HCT116 (cell line): ENCODE measurements at regions of chr17 and their contacts with region 1.

Region 1: DNA sequence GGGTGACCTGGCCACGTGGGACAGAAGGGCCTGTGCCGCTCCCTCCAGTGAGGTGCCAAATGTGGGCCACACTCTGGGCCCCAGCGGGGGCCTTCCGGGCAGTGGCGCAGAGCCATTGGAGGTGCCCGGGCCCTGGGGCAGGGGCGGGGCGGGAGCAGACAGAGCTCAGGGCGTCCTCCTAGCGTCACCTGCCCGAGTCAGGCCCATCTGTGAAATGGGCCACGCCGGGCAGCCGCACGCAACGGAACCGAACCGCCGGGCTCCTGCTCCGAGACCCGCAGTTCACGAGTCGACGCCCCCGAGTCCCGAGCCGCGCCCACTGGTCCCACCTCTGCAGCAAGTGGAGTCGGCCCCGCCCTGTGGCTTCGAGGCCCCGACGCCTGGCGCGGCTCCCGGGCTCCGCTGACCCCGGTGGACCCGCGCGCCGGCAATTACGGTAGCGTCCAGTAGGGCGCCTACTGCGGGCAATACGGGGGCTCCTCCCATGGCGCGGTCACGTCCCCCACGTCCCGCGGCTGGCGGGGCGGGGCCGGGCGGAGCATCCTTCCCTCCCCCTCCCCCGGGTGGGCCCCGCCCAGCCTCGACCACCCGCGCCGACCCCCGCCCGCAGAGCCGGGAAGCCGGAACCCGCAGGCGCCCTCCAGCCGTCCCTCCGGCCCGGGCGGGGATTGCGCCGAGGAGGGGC is 1.9 kb downstream of the SLC16A3 start:
- DNase-seq: no peak
- ATAC-seq: peak; percentile 57
- H3K4me3 ChIP-seq: peak overlapping the region; percentile 99 to 100
- H3K27ac ChIP-seq: peak overlapping the region; percentile 98
- H3K4me1 ChIP-seq: peaks cover 55 to 81% of the 10 kb centered on the region in 2 experiments
- H3K27me3 ChIP-seq: no peaks in the 10 kb centered on the region
- CTCF ChIP-seq: peak in 2 of 3 experiments; percentile 38 to 54; a peak in 4 of 6 replicates
- POLR2A ChIP-seq: no peak
- RAD21 ChIP-seq: no peak

Region 2: DNA sequence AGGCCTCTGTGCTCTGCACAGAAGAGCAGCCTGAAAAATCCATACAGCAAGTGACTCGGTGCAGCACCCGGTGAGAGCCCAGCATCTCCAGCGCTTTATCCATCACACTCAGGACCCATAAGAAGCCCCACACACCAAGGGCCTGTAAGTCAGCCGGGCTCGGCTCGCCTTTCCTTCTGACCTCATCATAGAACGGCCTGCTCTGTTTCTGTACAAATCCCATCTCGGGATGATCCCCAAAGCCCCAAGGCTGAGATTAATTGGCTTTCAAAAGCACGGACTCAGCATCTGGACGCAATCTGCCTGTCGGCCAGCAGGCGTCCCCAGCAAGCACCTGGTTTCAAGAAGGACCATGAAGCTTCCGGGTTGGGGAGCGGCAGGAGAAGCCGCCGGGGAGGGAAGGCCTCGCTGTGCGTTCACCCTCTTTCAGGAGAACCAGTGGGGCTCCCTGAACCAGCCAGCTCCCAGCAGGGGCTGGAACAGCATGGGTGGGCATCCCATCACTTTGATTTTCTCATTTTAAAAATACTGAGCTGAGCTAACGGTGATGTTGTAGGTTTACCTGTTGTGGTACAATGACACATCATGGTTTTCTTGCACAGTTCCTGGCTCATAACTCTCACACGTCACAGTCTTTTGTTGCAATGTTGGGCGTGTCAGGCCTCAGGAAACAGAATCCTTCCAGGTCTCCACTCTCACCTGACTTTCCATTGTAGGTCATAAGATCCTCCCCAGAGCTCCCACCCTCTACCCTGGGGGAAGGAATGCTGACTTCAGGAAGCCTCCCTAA is 24.9 kb before region 1 on chr17:
- CTCF ChIA-PET with region 1: interaction called, 9 read pairs
- POLR2A ChIA-PET with region 1: interaction called, 21 read pairs
- RAD21 ChIA-PET with region 1: interaction called, 5 to 6 read pairs
- intact Hi-C with region 1: loop called (anchors 1 kb)
- DNase-seq: peak; percentile 93
- ATAC-seq: peak; percentile 77
- H3K4me3 ChIP-seq: peak overlapping the region; percentile 19 to 47
- H3K27ac ChIP-seq: peak overlapping the region; percentile 75
- H3K4me1 ChIP-seq: peaks cover 35 to 53% of the 10 kb centered on the region in 2 experiments
- H3K27me3 ChIP-seq: no peaks in the 10 kb centered on the region
- CTCF ChIP-seq: peak in 2 of 3 experiments; percentile 98; a peak in 5 of 6 replicates
- POLR2A ChIP-seq: peak; percentile 80
- RAD21 ChIP-seq: peak; percentile 87

Region 3: DNA sequence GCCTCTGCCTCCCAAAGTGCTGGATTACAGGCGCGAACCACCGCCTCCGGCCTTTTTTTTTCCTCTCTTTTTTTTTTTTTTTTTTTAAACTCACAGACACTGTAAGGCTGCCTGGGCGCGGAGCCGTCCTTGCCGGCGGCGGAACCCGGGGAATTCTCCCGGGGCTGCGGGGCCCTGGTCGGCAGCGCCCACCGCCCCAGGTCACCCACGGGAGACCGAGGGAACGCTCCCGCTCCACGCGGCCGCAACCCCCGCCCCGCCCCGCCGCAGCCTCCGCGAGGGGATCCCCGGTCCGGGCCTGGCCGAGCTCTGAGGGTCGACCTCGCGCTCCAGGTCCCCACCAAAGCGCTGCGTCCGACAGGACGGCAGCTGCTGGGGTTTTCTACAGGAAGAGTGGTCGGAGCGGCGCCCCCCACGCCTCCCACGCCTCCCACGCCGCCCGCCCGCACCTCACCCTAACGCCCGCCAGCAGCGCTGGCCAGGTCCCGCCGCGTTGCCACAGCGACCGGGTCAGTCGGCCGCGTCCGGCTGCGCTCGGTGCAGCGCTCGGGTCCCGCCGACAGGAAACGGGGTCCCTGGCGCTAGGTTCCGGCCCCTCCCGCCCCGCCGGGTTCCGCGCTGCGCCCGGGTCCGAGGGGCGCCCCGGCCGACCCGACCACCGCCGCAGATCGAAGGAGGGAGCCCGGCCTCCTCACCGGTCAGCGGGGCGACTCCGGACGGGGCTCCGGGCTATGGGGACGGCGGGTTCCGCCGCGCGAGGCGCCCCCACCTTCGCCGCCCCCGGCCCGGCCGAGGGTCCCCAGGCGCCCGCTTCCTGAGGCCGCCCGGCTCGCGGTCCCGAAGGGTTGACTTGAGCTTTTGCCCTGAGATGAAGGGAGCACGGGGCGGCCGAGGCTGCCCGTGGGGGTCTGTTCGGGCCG is 18.2 kb before region 1 on chr17 and contains the start of gene CCDC57:
- CTCF ChIA-PET with region 1: interaction called, 4 read pairs
- POLR2A ChIA-PET with region 1: interaction called, 31 read pairs
- RAD21 ChIA-PET with region 1: interaction called in 1 of 2 experiments, 6 read pairs
- intact Hi-C with region 1: loop called (anchors 1 kb)
- DNase-seq: no peak
- ATAC-seq: peak; percentile 63
- H3K4me3 ChIP-seq: peak within 1 kb of the TSS; percentile 83 to 95
- H3K27ac ChIP-seq: peak within 1 kb of the TSS; percentile 97
- H3K4me1 ChIP-seq: peaks cover 43 to 69% of the 10 kb centered on the region in 2 experiments
- H3K27me3 ChIP-seq: no peaks in the 10 kb centered on the region
- CTCF ChIP-seq: no peak
- POLR2A ChIP-seq: peak; percentile 45
- RAD21 ChIP-seq: no peak
- total RNA-seq, gene CCDC57: 143 TPM